Cardiac septum (tissue), 1 donor: ENCODE measurements at regions of chr5 and their contacts with region 1.

Region 1: DNA sequence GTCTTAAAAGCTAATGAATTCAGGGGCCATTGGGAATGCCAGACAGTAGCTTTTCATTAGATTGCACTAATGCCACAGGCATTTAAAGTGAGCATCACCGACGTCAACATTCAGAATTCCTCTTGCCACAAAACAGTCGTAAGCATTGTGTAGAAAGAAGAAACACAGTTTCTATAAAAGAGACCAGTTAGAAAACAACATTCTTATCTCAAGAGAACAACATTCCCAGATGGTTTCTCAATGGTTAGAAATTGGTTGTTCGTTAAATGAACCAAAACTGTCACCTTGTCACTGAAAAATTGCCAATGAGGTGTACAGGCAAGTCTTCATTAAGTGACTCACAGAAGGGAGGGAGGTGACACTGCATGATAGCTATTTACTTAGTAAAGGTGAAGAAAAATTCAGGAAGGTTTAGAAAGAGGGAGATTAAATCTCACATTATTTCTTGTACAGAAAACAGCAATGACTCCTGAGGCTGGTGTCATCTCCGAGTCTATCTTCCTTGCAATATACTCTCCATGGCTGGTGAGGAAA is 401.5 kb upstream of the PRR16 start:
- DNase-seq: no peak

Region 2: DNA sequence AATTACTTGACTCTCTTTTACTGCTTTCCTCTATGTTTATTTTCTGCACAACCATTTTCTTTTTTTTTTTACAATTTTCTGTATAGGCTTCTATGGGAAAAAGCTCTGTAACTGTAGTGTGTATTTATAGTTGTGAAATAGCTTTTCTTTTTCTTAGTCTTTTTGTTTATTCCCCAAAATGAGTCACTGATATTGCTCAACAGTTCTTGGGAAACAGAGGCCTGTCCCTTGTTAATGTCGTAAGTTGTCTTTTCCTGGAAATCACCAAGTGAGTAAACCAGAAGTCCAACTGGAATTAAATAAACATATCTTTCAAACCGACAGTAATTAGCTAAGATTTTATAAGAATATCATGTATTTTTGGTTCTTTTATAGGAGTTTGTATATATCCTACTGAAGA is 76.5 kb after region 1 on chr5:
- intact Hi-C with region 1: loop called (anchors 5 kb)
- DNase-seq: no peak